A673 (cell line): ENCODE measurements at regions of chr7 and their contacts with region 1.

Region 1: GRCh38 chr7:136869001-136869961 is 829 bp downstream of the CHRM2 start:
- DNase-seq: peak; percentile 33
- H3K4me3 ChIP-seq: peak overlapping the region; percentile 52
- H3K27ac ChIP-seq: no peak overlapping the region
- H3K4me1 ChIP-seq: peaks cover 14% of the 10 kb centered on the region
- H3K27me3 ChIP-seq: peaks cover 24% of the 10 kb centered on the region
- CTCF ChIP-seq: no peak

Region 2: DNA sequence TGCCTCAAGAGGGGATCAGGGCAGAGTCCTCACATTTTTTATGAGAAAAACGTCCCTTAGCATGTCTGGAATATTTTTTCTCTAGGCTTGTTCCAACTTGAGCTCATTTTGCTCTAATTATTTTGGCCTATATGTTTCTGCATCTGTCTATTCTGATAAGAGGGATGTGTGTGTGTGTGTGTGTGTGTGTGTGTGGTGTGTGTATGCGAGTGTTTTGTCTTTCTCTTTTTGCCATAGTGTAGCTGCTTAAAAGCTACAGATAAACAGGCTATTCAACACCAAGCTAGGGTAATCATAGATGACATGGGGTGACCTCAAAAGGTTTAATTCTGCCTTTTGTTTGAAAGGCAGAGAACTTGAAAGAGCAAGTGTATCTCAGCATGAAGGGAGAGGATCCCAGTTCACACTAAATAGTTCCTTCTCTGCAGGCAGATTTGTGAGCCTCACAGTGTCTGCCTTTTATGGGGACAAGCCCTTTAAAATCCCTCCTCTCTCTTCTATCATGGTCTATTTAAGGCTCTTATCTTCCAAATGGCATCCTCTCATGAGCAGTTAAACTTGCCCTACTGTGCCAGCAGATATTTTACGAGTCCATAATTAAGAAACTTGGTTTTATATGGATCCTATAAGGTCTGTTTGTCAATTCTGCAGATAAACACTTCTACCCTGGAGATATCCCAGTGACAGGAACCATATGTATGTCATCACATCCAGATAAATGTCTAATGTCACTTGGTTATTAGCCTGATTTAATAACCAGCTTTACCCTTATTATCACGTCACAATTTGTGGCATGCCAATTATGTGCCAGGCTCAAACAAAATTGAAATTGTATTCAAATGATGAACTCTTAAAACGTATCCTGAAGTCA is 689.2 kb before region 1 on chr7:
- CTCF ChIA-PET with region 1: no interaction called
- POLR2A ChIA-PET with region 1: interaction called, 19 read pairs
- intact Hi-C with region 1: no loop called
- DNase-seq: no peak
- H3K4me3 ChIP-seq: no peak overlapping the region
- H3K27ac ChIP-seq: no peak overlapping the region
- H3K4me1 ChIP-seq: peaks cover 18% of the 10 kb centered on the region
- H3K27me3 ChIP-seq: no peaks in the 10 kb centered on the region
- CTCF ChIP-seq: no peak

Region 3: DNA sequence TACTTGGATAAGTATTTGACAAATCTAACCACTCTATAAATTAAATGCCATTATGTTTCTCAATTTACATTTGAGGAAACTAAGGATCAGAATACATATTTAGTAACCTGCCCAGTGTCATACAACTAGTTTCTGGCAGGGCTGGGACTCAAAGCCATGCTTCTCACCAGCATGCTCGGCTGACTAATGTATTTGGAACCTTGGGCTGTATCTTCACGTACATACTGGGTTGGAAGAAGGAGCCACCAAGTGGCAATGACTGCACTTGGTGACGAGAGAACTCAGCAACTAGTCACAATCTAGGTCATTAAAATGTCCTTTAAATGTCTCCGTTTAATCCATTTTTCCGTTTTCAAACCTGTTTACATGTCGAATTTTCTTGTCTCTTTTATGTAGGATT is 42.1 kb after region 1 on chr7:
- CTCF ChIA-PET with region 1: no interaction called
- POLR2A ChIA-PET with region 1: no interaction called
- intact Hi-C with region 1: loop called (anchors 1 kb)
- DNase-seq: peak; percentile 36
- H3K4me3 ChIP-seq: no peak overlapping the region
- H3K27ac ChIP-seq: no peak overlapping the region
- H3K4me1 ChIP-seq: no peaks in the 10 kb centered on the region
- H3K27me3 ChIP-seq: no peaks in the 10 kb centered on the region
- CTCF ChIP-seq: no peak